Natural killer cell (primary cell): ENCODE measurements at regions of chr12 and their contacts with region 1.

Region 1: DNA sequence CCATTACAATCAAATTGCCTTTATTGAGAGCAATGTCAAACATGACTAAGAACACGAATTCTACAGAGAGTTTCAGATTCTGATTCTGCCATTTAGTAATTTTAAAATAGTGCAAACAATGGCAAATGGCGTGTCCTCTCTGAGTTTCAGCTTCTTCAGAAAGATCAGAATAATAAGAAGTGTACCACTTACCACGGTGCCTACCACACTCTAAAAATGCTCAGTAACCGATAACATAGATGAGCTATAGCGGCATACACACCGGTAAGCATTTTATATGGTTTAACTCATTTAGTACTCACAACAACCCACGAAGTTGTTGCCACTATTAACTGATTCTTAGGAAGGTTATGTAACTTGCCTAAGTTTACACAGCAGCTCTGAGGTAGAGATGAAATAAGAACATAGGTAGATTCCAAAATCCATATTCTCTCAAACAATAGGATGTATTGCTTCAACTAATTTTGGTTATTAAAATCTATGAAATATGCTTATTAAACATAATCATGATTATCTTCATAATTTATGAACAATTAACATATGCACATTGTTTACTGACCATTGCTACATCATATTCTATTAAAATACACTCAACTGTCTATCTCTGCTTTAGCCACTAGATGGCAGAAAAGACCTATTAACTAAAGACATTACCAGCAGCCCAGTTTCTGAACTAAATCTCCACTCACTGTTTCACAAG is 38.3 kb downstream of the SLC6A15 start:
- DNase-seq: peak in 1 of 2 donors; percentile 51
- ATAC-seq: peak; percentile 46 to 64 (median 53)
- H3K4me3 ChIP-seq: no peak overlapping the region
- H3K4me3 Mint-ChIP-seq: no peak overlapping the region
- H3K27ac ChIP-seq: no peak overlapping the region
- H3K27ac Mint-ChIP-seq: no peak overlapping the region
- H3K4me1 ChIP-seq: no peaks in the 10 kb centered on the region
- H3K4me1 Mint-ChIP-seq: no peaks in the 10 kb centered on the region
- H3K27me3 ChIP-seq: no peaks in the 10 kb centered on the region
- H3K27me3 Mint-ChIP-seq: no peaks in the 10 kb centered on the region
- CTCF ChIP-seq: peak; percentile 72

Region 2: GRCh38 chr12:84745127-84745526 is 129.1 kb before region 1 on chr12:
- intact Hi-C with region 1: no loop called
- DNase-seq: no peak
- ATAC-seq: no peak
- H3K4me3 ChIP-seq: no peak overlapping the region
- H3K4me3 Mint-ChIP-seq: no peak overlapping the region
- H3K27ac ChIP-seq: no peak overlapping the region
- H3K27ac Mint-ChIP-seq: no peak overlapping the region
- H3K4me1 ChIP-seq: no peaks in the 10 kb centered on the region
- H3K4me1 Mint-ChIP-seq: no peaks in the 10 kb centered on the region
- H3K27me3 ChIP-seq: no peaks in the 10 kb centered on the region
- H3K27me3 Mint-ChIP-seq: no peaks in the 10 kb centered on the region
- CTCF ChIP-seq: no peak

Region 3: DNA sequence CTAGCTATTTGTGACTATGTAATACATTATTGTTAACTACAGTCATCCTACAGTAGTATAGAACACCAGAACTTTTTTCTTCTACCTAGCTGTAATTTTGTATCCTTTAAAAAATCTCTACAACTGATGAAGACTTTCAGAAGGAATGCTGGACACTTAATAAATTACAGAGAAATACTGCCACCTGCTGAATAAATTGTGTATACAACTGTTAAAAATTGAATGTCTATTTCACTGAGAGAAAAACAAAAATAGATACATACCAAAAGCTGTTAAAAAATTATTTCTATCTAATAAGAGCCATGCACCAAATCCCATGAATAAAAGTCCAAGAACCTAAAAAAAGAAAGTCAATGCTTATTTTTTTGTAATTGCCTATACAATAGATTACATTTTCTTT is 155.2 kb after region 1 on chr12:
- intact Hi-C with region 1: loop called (anchors 1 kb)
- DNase-seq: no peak
- ATAC-seq: no peak
- H3K4me3 ChIP-seq: no peak overlapping the region
- H3K4me3 Mint-ChIP-seq: no peak overlapping the region
- H3K27ac ChIP-seq: no peak overlapping the region
- H3K27ac Mint-ChIP-seq: no peak overlapping the region
- H3K4me1 ChIP-seq: no peaks in the 10 kb centered on the region
- H3K4me1 Mint-ChIP-seq: no peaks in the 10 kb centered on the region
- H3K27me3 ChIP-seq: no peaks in the 10 kb centered on the region
- H3K27me3 Mint-ChIP-seq: no peaks in the 10 kb centered on the region
- CTCF ChIP-seq: no peak

Region 4: DNA sequence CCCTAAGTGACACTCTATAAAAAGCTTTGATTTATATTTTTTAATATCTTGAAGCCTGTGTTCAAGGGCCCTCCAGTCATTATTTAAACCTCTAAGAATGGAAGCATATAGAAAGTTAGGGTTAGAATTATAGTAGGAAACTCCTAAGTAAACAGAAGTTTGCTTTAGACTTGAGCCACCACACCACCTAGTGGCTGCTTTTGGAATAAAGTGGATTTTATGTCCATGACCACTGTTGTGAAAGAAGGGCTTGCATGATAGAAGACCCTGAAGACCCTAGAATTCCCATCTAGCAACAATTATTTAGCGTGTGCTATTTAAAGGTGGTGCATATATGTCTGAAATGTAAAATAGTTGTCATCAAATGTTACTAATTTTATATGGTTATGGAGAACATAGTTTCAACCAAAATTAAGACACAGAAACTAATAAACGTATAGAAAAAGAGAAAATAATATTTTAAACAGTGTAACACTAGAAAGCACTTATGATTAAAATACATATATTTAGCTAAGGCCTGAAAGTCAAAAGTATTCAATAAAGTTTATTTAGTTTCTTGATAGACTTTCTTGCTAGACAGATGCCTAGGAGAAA is 183.2 kb after region 1 on chr12:
- intact Hi-C with region 1: loop called (anchors 1 kb)
- DNase-seq: peak in 1 of 2 donors; percentile 35
- ATAC-seq: peak in 1 of 3 donors; percentile 32
- H3K4me3 ChIP-seq: no peak overlapping the region
- H3K4me3 Mint-ChIP-seq: no peak overlapping the region
- H3K27ac ChIP-seq: no peak overlapping the region
- H3K27ac Mint-ChIP-seq: no peak overlapping the region
- H3K4me1 ChIP-seq: no peaks in the 10 kb centered on the region
- H3K4me1 Mint-ChIP-seq: no peaks in the 10 kb centered on the region
- H3K27me3 ChIP-seq: no peaks in the 10 kb centered on the region
- H3K27me3 Mint-ChIP-seq: no peaks in the 10 kb centered on the region
- CTCF ChIP-seq: peak; percentile 53